ENCODE measurements at regions of chr2 and their contacts with region 1.

Region 1: DNA sequence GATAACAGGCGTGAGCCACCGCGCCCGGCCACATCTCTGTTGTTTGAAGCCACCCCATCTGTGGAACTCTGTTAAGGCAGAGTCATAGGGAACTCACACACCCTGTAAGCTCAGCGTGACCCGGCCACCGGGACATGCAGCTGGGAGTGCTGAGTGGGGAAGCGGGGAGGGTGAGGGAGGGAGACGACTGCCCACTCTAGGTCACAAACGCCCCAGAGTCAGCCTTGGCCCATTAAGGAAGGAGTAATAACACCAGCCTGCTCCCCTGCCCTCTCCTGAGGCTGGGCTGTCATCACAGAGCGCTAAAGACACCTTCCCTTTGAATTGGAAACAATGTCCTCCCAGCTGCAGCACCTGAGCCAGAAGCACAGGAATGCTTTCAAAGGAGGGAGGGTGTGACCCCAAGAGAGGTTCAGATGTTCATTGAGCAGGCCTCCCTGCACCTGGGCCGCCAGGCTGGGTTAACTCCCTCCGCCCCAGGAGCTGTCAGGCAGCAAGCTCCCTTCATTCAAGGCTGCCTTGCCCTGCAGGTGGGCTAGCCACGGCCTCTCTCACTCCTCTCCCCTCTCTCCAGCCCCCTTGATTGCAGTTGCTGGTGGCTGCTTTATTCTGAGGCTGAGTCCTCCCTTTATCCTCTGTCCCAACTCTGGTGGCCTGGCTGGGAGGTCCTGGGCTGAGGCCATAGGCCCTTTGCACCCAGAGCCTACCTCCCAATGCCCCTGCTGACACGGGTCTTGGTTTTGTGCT is 77.2 kb upstream of the HPCAL1 start:
- DNase-seq: no peak
- H3K4me3 ChIP-seq: no peak overlapping the region
- H3K27ac ChIP-seq: no peak overlapping the region
- H3K4me1 ChIP-seq: no peaks in the 10 kb centered on the region
- H3K27me3 ChIP-seq: no peaks in the 10 kb centered on the region
- CTCF ChIP-seq: no peak

Region 2: DNA sequence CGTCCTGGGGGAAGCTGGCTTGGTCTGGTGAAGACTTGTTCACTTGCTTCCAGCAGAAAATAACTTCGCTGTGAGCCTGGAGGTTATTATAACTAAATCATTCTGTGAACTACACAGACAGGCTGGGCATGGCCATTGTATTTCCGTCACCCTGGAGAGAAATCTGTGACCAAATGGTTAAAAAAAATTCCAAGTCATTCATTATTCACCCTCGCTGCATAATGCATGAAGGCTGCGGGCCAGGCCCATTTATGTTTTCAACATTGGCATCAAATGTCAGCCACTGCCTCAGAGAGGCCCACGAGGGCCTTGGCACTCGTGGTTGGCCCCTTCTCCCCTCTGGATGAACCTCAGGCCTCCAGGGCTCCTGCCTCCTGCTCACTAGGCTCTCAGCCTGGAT is 45.2 kb before region 1 on chr2:
- CTCF ChIA-PET with region 1: no interaction called
- dilution Hi-C with region 1: loop called (anchors 5 kb)
- in situ Hi-C with region 1: no loop called
- intact Hi-C with region 1: no loop called
- DNase-seq: no peak
- H3K4me3 ChIP-seq: no peak overlapping the region
- H3K27ac ChIP-seq: no peak overlapping the region
- H3K4me1 ChIP-seq: no peaks in the 10 kb centered on the region
- H3K27me3 ChIP-seq: no peaks in the 10 kb centered on the region
- CTCF ChIP-seq: no peak

Region 3: GRCh38 chr2:10316336-10316735 is 90.9 kb after region 1 on chr2:
- CTCF ChIA-PET with region 1: no interaction called
- dilution Hi-C with region 1: loop called (anchors 5 kb)
- in situ Hi-C with region 1: no loop called
- intact Hi-C with region 1: no loop called
- DNase-seq: no peak
- H3K4me3 ChIP-seq: no peak overlapping the region
- H3K27ac ChIP-seq: no peak overlapping the region
- H3K4me1 ChIP-seq: peaks cover 5% of the 10 kb centered on the region
- H3K27me3 ChIP-seq: no peaks in the 10 kb centered on the region
- CTCF ChIP-seq: no peak

Measured in mammary epithelial cell (primary cell).